ENCODE measurements at regions of chr2 and their contacts with region 1.

Region 1: DNA sequence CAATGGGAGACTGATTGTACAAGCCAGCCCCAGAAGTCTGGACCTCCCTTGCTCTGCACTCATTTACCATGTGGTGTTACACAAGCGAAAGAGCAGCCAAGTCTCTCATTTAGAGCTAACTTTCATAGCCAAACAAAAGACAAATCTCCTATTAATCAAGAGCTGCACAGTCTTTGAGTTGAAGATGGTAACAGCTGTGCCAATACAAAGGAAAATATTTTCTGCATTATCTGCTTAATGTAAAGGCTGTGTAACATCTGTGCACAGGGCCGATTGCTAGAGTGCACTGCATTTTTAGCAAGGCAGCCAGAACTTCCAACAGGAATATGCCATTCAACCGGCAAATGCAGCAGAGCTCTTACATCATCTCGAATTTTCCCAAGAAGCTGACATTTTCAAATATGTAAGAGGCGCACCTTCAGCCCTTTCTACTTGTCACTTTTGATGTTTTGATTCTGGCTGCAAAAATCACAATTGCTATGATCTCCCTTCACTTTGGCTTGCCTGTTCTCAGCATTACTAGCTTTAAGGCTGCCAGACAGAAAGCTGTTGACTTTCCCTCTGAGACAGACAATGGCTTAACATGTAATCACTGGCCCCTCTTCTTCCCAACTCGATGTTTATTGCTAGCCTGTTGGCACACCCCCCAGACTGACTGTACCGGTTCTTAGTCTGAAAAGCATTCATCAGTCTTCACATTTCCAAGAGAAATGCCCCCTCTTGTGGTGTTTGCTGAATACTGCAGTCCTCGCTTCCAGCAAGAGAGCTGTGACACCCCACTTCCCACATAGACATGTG is 96.9 kb upstream of the TANK start:
- DNase-seq: peak; percentile 91
- H3K4me3 ChIP-seq: no peak overlapping the region
- H3K27ac ChIP-seq: no peak overlapping the region
- H3K4me1 ChIP-seq: no peaks in the 10 kb centered on the region
- H3K27me3 ChIP-seq: no peaks in the 10 kb centered on the region
- CTCF ChIP-seq: peak; percentile 66 to 91 (median 86)
- POLR2A ChIP-seq: no peak

Region 2: GRCh38 chr2:160109936-160110673 is 953.3 kb before region 1 on chr2:
- intact Hi-C with region 1: loop called (anchors 5 kb)
- DNase-seq: peak; percentile 73
- H3K4me3 ChIP-seq: no peak overlapping the region
- H3K27ac ChIP-seq: no peak overlapping the region
- H3K4me1 ChIP-seq: no peaks in the 10 kb centered on the region
- H3K27me3 ChIP-seq: no peaks in the 10 kb centered on the region
- CTCF ChIP-seq: peak in 3 of 4 experiments; percentile 76 to 77 (median 76)
- POLR2A ChIP-seq: no peak

Region 3: GRCh38 chr2:160842286-160842685 is 221.1 kb before region 1 on chr2:
- intact Hi-C with region 1: no loop called
- DNase-seq: no peak
- H3K4me3 ChIP-seq: no peak overlapping the region
- H3K27ac ChIP-seq: no peak overlapping the region
- H3K4me1 ChIP-seq: no peaks in the 10 kb centered on the region
- H3K27me3 ChIP-seq: no peaks in the 10 kb centered on the region
- CTCF ChIP-seq: no peak
- POLR2A ChIP-seq: no peak

Region 4: GRCh38 chr2:161118722-161119121 is 55.4 kb after region 1 on chr2:
- intact Hi-C with region 1: no loop called
- DNase-seq: no peak
- H3K4me3 ChIP-seq: no peak overlapping the region
- H3K27ac ChIP-seq: no peak overlapping the region
- H3K4me1 ChIP-seq: peaks cover 4% of the 10 kb centered on the region
- H3K27me3 ChIP-seq: no peaks in the 10 kb centered on the region
- CTCF ChIP-seq: no peak
- POLR2A ChIP-seq: no peak

Measured in prostate gland (tissue), 2 donors.